ENCODE measurements at regions of chr2 and their contacts with region 1.

Region 1: GRCh38 chr2:1234731-1235308 is 178.4 kb upstream of the TPO start:
- DNase-seq: no peak
- H3K4me3 ChIP-seq: no peak overlapping the region
- H3K27ac ChIP-seq: no peak overlapping the region
- H3K4me1 ChIP-seq: no peaks in the 10 kb centered on the region
- H3K27me3 ChIP-seq: no peaks in the 10 kb centered on the region
- CTCF ChIP-seq: no peak
- EP300 ChIP-seq: no peak
- POLR2A ChIP-seq: no peak

Region 2: DNA sequence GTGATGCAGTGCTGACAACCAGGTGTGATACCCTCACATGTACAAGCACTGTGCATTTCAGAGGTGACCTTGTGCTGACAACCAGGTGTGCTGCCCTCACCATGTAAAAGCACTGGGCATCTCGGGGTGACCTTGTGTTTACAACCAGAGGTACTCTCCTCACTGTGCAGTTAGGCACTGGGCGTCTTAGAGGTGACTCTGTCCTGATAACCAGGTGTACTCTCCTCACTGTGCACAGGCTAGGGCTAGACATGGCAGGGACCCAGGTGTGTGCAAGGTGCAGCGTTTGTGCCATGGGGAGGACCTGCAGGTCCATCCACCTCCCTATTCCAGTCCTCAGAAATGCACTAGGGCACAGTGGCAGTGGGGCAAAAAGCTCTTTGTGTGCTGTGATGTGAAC is 938.5 kb before region 1 on chr2:
- in situ Hi-C with region 1: no loop called
- intact Hi-C with region 1: no loop called
- DNase-seq: no peak
- H3K4me3 ChIP-seq: no peak overlapping the region
- H3K27ac ChIP-seq: no peak overlapping the region
- H3K4me1 ChIP-seq: no peaks in the 10 kb centered on the region
- H3K27me3 ChIP-seq: peaks cover 23% of the 10 kb centered on the region
- CTCF ChIP-seq: no peak
- EP300 ChIP-seq: no peak
- POLR2A ChIP-seq: no peak

Region 3: DNA sequence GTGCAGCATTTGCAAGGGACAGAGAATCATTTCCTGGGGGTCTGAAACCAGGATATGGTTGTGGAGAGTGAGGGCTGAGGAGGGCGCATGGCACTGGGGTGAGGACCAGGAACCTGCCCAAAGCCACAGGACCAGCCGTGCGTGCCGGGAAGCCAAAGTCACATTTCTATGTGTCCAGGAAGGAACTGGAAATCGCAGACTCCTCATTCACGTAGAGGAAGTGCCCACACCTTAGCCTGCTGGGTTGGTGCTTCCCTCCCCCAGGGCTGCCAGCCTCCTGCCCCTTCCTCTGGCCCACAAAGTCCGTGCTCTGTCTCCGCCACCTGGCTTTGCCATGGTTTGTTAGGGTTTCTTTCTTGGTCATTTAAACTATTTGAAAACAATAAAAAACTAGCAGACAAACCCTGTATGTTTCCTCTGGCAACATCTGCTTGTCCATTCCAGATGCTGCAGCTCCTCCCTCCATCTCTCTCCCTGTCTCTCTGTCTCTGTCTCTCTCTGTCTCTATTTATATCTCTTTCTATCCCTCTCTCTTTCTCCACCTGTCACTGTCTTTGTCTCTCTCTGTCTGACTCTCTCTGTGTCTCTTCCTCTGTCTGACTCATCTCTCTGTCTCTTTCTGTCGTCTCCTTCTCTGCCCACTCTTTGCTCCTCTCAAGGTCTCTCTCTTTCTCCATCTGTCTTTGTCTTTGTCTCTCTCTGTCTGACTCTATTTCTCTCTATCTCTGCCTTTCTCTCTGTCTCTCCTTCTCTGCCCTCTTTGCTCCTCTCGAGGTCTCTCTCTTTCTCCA is 15.3 kb after region 1 on chr2:
- in situ Hi-C with region 1: no loop called
- intact Hi-C with region 1: loop called (anchors 1 kb)
- DNase-seq: no peak
- H3K4me3 ChIP-seq: no peak overlapping the region
- H3K27ac ChIP-seq: no peak overlapping the region
- H3K4me1 ChIP-seq: no peaks in the 10 kb centered on the region
- H3K27me3 ChIP-seq: peaks cover 4% of the 10 kb centered on the region
- CTCF ChIP-seq: no peak
- EP300 ChIP-seq: no peak
- POLR2A ChIP-seq: no peak

Region 4: DNA sequence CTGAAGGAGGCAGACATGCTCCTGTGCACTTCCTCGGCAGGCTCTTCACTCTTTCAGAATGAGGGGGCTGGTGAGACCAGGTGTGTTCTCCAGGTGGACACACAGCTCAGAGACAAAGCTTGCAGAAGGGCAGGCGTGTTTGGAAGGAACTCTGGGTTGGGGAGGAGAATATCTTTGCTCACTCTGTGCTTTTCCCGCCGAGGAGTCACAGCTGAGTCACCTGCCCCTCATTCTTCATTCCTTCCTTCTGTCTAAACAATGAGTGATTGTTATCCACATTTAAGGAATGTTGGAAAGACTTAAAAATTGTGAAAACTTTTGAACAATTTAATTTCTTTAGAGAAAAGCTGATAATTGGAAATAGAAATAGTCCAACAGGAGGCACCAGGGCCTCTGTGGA is 52.1 kb after region 1 on chr2:
- in situ Hi-C with region 1: no loop called
- intact Hi-C with region 1: no loop called
- DNase-seq: no peak
- H3K4me3 ChIP-seq: no peak overlapping the region
- H3K27ac ChIP-seq: no peak overlapping the region
- H3K4me1 ChIP-seq: no peaks in the 10 kb centered on the region
- H3K27me3 ChIP-seq: no peaks in the 10 kb centered on the region
- CTCF ChIP-seq: no peak
- EP300 ChIP-seq: no peak
- POLR2A ChIP-seq: no peak

Region 5: GRCh38 chr2:1641523-1641922 is 406.7 kb after region 1 on chr2:
- in situ Hi-C with region 1: no loop called
- intact Hi-C with region 1: no loop called
- DNase-seq: no peak
- H3K4me3 ChIP-seq: no peak overlapping the region
- H3K27ac ChIP-seq: peak overlapping the region; percentile 29 to 70 (median 47)
- H3K4me1 ChIP-seq: peaks cover 5 to 23% (median 10%) of the 10 kb centered on the region in 4 donors
- H3K27me3 ChIP-seq: no peaks in the 10 kb centered on the region
- CTCF ChIP-seq: no peak
- EP300 ChIP-seq: no peak
- POLR2A ChIP-seq: no peak